ENCODE measurements at regions of chr13 and their contacts with region 1.

Region 1: GRCh38 chr13:30158774-30159445 is 148.4 kb downstream of the KATNAL1 start:
- DNase-seq: no peak
- H3K4me3 ChIP-seq: no peak overlapping the region
- H3K27ac ChIP-seq: no peak overlapping the region
- H3K4me1 ChIP-seq: peaks cover 2 to 8% (median 6%) of the 10 kb centered on the region in 4 experiments
- H3K27me3 ChIP-seq: no peaks in the 10 kb centered on the region

Region 2: DNA sequence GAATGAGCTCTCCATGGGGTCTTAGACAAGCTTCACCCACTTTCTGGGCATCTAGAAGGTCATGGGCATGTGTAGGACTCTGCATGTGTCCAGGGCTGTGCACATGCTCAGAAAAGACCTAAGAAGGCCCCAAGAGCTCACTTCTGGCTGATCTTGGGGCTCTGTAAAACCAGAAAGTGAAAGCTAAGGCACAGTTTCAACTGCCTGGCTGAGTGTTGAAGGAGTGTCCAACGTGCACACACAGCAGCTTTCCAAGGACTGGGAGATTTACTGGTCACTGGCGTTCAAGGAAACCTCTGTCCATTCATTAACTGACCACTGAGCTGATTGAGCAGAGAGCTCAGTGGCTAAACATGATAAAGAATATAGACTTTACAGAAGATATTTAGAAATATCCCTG is 10.5 kb after region 1 on chr13:
- CTCF ChIA-PET with region 1: interaction called, 3 read pairs
- POLR2A ChIA-PET with region 1: interaction called, 10 read pairs
- DNase-seq: no peak
- H3K4me3 ChIP-seq: no peak overlapping the region
- H3K27ac ChIP-seq: no peak overlapping the region
- H3K4me1 ChIP-seq: peaks cover 0 to 6% (median 2%) of the 10 kb centered on the region in 4 experiments
- H3K27me3 ChIP-seq: no peaks in the 10 kb centered on the region

Measured in common myeloid progenitor, CD34-positive (primary cell).